IMR-90 (cell line): ENCODE measurements at regions of chr6 and their contacts with region 1.

Region 1: DNA sequence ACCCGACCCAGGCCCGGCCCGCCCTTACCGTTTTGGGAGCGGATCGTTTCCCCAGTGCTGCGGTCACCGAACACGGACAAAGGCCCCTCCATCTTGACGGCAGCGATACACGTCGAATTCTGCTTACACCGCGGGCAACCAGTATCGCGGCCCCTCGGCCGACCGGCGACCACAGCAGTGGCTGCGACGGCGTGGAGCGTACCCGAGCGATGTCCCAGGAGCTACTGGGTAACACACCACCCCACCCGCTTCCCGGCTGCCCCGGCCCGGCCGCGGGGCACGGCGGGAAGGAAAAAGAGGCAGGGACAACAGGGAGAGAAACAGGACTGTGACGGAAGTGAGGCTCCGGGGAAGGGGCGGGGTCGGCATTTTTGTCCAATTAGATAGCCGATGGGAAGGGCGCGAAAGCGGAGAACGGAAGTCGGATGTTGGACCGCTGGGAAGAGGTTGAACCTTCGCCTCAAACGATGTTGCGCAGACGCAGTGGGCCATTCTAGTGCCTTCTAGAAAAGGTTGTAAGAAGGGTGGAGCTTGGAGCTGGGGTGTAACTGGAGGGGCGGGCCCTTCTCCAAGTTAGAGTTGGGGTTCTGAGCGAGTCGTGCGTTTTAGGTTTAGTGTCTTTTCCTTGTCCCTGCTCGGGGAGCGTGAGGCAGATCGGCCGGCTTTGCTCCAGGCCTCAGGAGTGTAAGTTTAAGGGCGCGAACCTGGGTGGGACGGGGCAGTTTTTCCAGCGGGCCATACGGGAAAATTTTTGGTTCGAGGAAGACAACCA is at the start of gene TCP1:
- DNase-seq: peak; percentile 99
- ATAC-seq: peak; percentile 89
- H3K4me3 ChIP-seq: peak within 1 kb of the TSS; percentile 89
- H3K27ac ChIP-seq: peak within 1 kb of the TSS; percentile 91
- H3K4me1 ChIP-seq: peaks cover 4% of the 10 kb centered on the region
- H3K27me3 ChIP-seq: no peaks in the 10 kb centered on the region
- CTCF ChIP-seq: no peak
- POLR2A ChIP-seq: peak; percentile 95
- RAD21 ChIP-seq: no peak
- total RNA-seq, gene TCP1: 576 and 610 TPM in 2 replicates

Region 2: GRCh38 chr6:159726918-159727716 is 62.4 kb before region 1 on chr6 and contains the start of gene WTAP:
- CTCF ChIA-PET with region 1: no interaction called
- POLR2A ChIA-PET with region 1: no interaction called
- dilution Hi-C with region 1: no loop called
- in situ Hi-C with region 1: no loop called
- intact Hi-C with region 1: loop called (anchors 1 kb)
- DNase-seq: peak; percentile 92
- ATAC-seq: peak; percentile 95
- H3K4me3 ChIP-seq: peak within 1 kb of the TSS; percentile 98
- H3K27ac ChIP-seq: peak within 1 kb of the TSS; percentile 99
- H3K4me1 ChIP-seq: peaks cover 3% of the 10 kb centered on the region; the same call in 1 of the 2 replicates
- H3K27me3 ChIP-seq: no peaks in the 10 kb centered on the region
- CTCF ChIP-seq: no peak
- POLR2A ChIP-seq: peak; percentile 94
- RAD21 ChIP-seq: no peak
- total RNA-seq, gene WTAP: 92.3 and 124 TPM in 2 replicates

Region 3: GRCh38 chr6:159739341-159739740 is 50.2 kb before region 1 on chr6:
- CTCF ChIA-PET with region 1: no interaction called
- POLR2A ChIA-PET with region 1: interaction called, 3 read pairs
- dilution Hi-C with region 1: no loop called
- in situ Hi-C with region 1: no loop called
- intact Hi-C with region 1: loop called (anchors 2 kb)
- DNase-seq: no peak
- ATAC-seq: no peak
- H3K4me3 ChIP-seq: no peak overlapping the region
- H3K27ac ChIP-seq: no peak overlapping the region
- H3K4me1 ChIP-seq: no peaks in the 10 kb centered on the region
- H3K27me3 ChIP-seq: no peaks in the 10 kb centered on the region
- CTCF ChIP-seq: no peak
- POLR2A ChIP-seq: no peak
- RAD21 ChIP-seq: no peak

Region 4: DNA sequence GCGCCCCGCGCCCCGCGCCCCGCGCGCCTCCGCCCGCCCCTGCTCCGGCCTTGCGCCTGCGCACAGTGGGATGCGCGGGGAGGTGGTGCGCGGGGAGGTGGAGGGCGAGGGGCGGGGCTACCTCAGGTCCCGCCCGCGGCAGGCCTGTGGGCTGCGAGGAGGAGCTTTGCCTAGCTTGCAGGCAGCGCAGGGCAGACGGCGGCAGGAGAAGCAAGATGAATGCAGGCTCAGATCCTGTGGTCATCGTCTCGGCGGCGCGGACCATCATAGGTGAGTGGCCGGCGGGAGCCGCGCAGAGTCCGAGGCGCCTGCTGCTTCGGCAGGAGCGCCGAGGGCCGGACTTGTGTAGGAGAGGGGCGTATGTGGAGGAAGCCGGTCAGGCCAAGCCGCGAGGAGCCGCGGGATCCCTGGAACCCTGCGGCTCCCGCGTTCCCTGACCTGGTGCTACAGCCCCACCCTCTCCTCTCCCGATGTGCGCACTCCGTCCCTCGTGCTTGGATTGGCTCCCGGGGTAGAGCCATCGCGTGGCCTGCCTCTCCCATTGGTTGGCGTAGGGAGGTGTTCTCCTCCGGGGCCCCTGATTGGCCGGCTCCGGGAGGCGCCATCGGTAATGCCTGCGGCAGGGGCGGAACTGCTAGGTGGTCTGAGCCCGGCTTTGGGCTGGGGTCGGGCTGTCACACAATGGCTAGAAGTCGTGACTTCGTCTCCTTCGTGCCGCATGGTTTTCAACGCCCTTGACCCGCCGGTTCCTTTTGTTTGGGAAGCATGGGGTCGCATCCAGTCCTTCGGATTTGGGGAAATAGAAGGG is 27.5 kb before region 1 on chr6 and contains the start of gene ACAT2:
- CTCF ChIA-PET with region 1: no interaction called
- POLR2A ChIA-PET with region 1: interaction called, 6 read pairs
- dilution Hi-C with region 1: no loop called
- in situ Hi-C with region 1: no loop called
- intact Hi-C with region 1: loop called (anchors 1 kb)
- DNase-seq: peak; percentile 92
- ATAC-seq: peak; percentile 96
- H3K4me3 ChIP-seq: peak within 1 kb of the TSS; percentile 79
- H3K27ac ChIP-seq: peak within 1 kb of the TSS; percentile 94
- H3K4me1 ChIP-seq: peaks cover 20% of the 10 kb centered on the region
- H3K27me3 ChIP-seq: no peaks in the 10 kb centered on the region
- CTCF ChIP-seq: no peak
- POLR2A ChIP-seq: peak; percentile 39; the same call in 1 of the 2 replicates
- RAD21 ChIP-seq: no peak
- total RNA-seq, gene ACAT2: 45.2 and 50.3 TPM in 2 replicates

Region 5: DNA sequence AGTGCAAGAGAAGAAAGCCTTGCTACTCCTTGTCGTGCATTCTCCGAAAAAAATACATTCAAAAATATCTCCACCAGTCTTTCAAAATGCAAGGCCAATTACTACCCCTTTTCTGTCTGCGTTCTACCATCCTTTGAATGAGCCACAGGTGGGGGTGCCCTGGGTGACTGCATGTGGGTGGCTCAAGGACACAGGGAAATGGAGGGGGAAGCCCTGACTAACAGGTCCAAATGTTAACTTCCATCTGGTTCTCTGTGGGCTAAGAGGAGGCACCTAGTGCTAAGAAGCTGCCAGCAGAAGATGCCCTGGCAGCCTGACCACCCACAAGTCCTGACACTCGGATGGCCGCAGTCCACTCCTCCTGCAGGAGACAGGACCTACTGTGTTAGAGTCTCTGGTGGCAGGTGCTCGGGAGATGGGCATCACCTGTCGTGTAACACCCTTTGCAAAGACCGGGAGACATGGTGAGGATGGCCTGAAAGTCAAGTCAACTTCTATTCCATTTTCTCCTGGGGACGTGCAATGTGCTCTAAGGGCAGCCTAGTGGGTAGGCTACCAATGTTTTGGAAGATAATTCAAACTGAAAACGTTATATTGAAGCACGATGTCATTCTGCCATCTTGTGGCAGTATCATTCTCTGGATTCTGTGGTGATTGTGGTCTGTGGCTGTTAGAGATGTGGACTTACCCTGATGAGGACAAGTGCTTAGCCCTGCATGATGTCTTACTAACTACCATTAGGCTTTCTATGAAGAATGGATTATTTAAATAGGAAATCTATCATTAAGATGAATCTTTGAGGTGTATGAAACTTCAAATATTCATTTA is 151.9 kb after region 1 on chr6:
- CTCF ChIA-PET with region 1: no interaction called
- POLR2A ChIA-PET with region 1: no interaction called
- dilution Hi-C with region 1: no loop called
- in situ Hi-C with region 1: no loop called
- intact Hi-C with region 1: loop called (anchors 2 kb)
- DNase-seq: peak; percentile 57
- ATAC-seq: peak; percentile 85
- H3K4me3 ChIP-seq: no peak overlapping the region
- H3K27ac ChIP-seq: no peak overlapping the region
- H3K4me1 ChIP-seq: peaks cover 2% of the 10 kb centered on the region; the same call in 1 of the 2 replicates
- H3K27me3 ChIP-seq: peaks cover 3% of the 10 kb centered on the region; the same call in 1 of the 2 replicates
- CTCF ChIP-seq: peak; percentile 68
- POLR2A ChIP-seq: no peak
- RAD21 ChIP-seq: peak; percentile 85